ENCODE measurements at regions of chr6 and their contacts with region 1.

Region 1: GRCh38 chr6:160750276-160750689 is 48.2 kb downstream of the PLG start:
- DNase-seq: peak; percentile 61
- H3K4me3 Mint-ChIP-seq: no peak overlapping the region
- H3K27ac Mint-ChIP-seq: no peak overlapping the region
- H3K4me1 Mint-ChIP-seq: no peaks in the 10 kb centered on the region
- H3K27me3 Mint-ChIP-seq: peaks cover 12% of the 10 kb centered on the region
- CTCF ChIP-seq: peak; percentile 89

Region 2: DNA sequence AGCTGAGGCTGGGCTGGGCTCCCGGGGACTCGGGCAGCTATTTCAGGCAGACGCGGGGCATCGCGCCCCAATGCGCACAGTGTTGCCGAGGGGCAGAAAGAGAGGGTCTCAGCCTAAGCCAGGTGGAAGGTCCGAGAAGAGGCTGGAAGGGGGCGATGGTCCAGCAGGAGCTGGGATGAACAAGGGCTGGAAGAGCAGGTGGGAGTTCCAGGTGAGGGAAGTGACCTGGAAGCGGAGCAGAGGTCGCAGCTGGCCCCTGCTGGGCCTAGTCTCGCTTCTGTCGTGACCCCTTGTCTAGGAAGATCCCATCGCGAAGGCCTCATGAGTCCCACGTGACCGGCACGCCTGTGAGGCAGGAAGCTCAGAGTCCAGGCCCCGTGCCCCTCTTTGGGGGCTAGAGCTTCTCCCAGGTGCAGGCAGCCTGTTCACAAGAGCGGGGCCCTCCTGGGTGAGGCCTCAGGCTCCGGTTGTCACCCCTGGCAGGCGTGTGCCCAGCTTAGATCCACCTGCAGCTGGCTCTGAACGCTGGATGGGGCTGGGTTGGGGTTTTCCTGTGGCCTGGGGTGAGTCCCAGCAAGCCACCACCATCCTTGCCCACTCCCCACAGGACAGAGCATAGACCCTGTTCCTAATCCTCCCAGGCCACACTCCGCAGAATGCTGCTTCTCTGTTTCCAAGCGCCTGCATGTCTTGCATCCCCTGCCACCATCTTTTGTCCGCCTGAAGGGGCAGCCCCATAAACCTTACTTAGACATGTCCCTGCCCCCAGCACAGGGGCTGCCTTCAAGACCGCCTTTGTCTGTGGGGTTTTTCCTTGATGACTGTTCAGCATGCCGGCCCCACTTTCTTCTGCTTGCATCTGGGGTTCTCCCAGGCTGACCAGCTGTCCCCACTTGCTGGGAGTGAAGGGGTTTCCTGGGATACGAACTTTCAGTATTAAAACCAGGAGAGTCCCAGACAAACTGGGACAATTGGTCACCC is 387.0 kb before region 1 on chr6:
- CTCF ChIA-PET with region 1: no interaction called
- intact Hi-C with region 1: no loop called
- DNase-seq: no peak
- H3K4me3 Mint-ChIP-seq: no peak overlapping the region
- H3K27ac Mint-ChIP-seq: no peak overlapping the region
- H3K4me1 Mint-ChIP-seq: peaks cover 38% of the 10 kb centered on the region
- H3K27me3 Mint-ChIP-seq: no peaks in the 10 kb centered on the region
- CTCF ChIP-seq: no peak

Region 3: GRCh38 chr6:160439751-160440150 is 310.5 kb before region 1 on chr6:
- CTCF ChIA-PET with region 1: no interaction called
- intact Hi-C with region 1: no loop called
- DNase-seq: no peak
- H3K4me3 Mint-ChIP-seq: no peak overlapping the region
- H3K27ac Mint-ChIP-seq: no peak overlapping the region
- H3K4me1 Mint-ChIP-seq: no peaks in the 10 kb centered on the region
- H3K27me3 Mint-ChIP-seq: no peaks in the 10 kb centered on the region
- CTCF ChIP-seq: no peak

Region 4: DNA sequence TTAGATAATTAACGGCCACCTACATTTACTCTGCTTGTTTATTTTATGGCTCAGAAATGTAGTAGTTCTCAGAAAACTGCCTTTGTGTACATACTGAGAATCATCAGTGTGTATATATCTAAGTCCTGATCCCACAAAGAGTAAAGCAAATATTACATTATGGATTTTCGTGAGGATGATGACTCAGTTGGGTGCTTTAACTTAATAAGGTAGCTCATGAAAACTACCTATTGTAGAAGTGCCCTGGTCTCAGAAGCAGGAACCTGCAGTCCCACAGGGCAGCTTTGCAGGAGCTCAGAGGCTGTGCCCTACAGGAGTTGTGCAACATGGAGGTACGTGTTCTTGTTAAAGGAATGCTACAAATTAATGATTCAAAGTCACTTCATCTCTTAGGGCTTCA is 60.0 kb after region 1 on chr6:
- CTCF ChIA-PET with region 1: interaction called, 3 read pairs
- intact Hi-C with region 1: loop called (anchors 2 kb)
- DNase-seq: peak; percentile 66
- H3K4me3 Mint-ChIP-seq: peak overlapping the region; percentile 34
- H3K27ac Mint-ChIP-seq: peak overlapping the region; percentile 69
- H3K4me1 Mint-ChIP-seq: peaks cover 42% of the 10 kb centered on the region
- H3K27me3 Mint-ChIP-seq: no peaks in the 10 kb centered on the region
- CTCF ChIP-seq: no peak

Region 5: DNA sequence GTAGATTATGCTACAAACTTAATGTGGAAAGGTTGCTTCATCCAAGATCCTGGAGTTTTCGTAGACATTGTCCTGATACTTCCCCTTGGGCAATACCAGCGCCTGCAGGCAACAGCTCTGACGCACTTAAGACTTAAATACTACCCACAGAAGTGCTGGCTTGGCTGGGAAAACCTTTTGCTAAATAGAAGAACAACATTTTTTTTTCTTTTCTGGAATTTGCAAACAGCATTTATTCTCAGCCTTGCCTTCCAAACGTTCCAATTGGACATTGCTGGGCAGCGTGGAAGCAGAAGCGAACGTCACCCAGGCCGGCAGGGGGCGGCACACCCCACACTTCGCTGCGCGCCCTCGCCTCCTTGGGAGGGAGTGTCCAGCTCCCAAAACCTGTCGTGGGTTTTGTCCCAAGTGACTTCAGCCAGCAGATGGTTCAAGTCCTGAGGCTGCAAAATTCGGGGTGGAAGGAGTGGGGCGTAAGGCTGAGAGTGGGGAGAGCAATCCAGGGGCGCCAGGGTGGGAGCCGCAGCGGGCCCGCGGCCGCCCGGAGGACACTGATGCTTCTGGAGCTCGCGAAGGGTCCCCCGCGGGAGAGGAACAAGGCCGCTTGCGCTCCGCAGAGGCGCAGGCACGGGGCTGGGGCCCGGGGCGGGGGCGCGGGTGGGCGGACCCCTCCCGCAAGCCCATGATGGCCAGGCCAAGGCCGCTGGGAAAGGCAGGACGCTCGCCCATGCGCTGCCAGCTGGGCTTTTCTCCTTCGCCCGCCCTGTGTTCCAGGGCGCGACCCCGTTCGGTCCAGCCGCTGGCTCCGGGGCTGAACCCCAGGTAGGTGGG is 180.5 kb after region 1 on chr6:
- CTCF ChIA-PET with region 1: no interaction called
- intact Hi-C with region 1: loop called (anchors 5 kb)
- DNase-seq: peak; percentile 75
- H3K4me3 Mint-ChIP-seq: peak overlapping the region; percentile 63
- H3K27ac Mint-ChIP-seq: no peak overlapping the region
- H3K4me1 Mint-ChIP-seq: no peaks in the 10 kb centered on the region
- H3K27me3 Mint-ChIP-seq: no peaks in the 10 kb centered on the region
- CTCF ChIP-seq: peak; percentile 72

Region 6: DNA sequence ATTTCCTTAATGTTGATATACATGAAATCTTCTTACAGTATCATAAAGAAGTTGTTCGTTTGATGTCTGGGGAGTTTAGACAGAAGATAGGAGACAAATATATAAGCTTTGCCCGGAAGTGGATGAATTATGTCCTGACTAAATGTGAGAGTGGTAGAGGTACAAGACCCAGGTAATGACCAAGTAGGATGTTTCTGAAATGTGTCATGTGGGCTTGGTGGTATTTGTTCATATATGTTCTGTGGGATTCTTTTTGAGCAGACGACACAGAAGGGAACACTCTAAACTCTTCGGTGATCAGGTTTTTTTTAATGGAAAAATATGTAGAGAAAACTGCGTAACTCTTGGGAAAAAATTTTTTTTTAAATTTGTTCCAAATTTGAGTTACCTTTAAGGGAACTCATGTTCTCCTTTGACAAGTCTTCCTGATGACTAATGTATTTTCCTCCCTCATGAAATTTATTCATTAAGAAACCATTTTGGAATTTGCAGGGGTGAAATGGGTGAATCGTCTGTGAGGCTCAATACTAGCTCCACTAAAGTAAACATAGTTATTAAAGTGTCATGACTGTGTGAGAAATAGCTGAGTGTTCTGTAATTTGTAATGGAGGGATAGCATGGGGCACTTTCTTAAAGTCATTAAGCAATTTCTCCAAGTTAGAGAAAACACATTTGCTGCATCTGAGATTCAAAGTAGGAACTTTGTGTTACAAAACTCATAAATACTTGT is 341.9 kb after region 1 on chr6:
- CTCF ChIA-PET with region 1: no interaction called
- intact Hi-C with region 1: loop called (anchors 5 kb)
- DNase-seq: no peak
- H3K4me3 Mint-ChIP-seq: no peak overlapping the region
- H3K27ac Mint-ChIP-seq: no peak overlapping the region
- H3K4me1 Mint-ChIP-seq: no peaks in the 10 kb centered on the region
- H3K27me3 Mint-ChIP-seq: no peaks in the 10 kb centered on the region
- CTCF ChIP-seq: no peak

Measured in Calu3 (cell line).